Activated CD8-positive, alpha-beta T cell treated with anti-CD3 and anti-CD28 coated beads for 36 hours (primary cell): ENCODE measurements at regions of chr1 and their contacts with region 1.

Region 1: GRCh38 chr1:28886731-28887418 is 27.5 kb upstream of the EPB41 start:
- DNase-seq: peak; percentile 92
- ATAC-seq: peak; percentile 76
- H3K4me3 Mint-ChIP-seq: peak overlapping the region; percentile 86
- H3K27ac Mint-ChIP-seq: peak overlapping the region; percentile 98
- H3K4me1 Mint-ChIP-seq: peaks cover 52% of the 10 kb centered on the region
- H3K27me3 Mint-ChIP-seq: no peaks in the 10 kb centered on the region
- CTCF ChIP-seq: no peak

Region 2: GRCh38 chr1:28775121-28775944 is 111.5 kb before region 1 on chr1:
- CTCF ChIA-PET with region 1: interaction called, 18 read pairs
- POLR2A ChIA-PET with region 1: no interaction called
- intact Hi-C with region 1: no loop called
- DNase-seq: peak; percentile 71
- ATAC-seq: peak; percentile 94
- H3K4me3 Mint-ChIP-seq: peak overlapping the region; percentile 68
- H3K27ac Mint-ChIP-seq: peak overlapping the region; percentile 71
- H3K4me1 Mint-ChIP-seq: peaks cover 4% of the 10 kb centered on the region
- H3K27me3 Mint-ChIP-seq: no peaks in the 10 kb centered on the region
- CTCF ChIP-seq: no peak

Region 3: GRCh38 chr1:28914228-28915030 is 27.6 kb after region 1 on chr1 and contains the start of gene EPB41:
- CTCF ChIA-PET with region 1: interaction called, 15 read pairs
- POLR2A ChIA-PET with region 1: interaction called, 6 read pairs
- intact Hi-C with region 1: no loop called
- DNase-seq: peak; percentile 93
- ATAC-seq: peak; percentile 90
- H3K4me3 Mint-ChIP-seq: peak within 1 kb of the TSS; percentile 92
- H3K27ac Mint-ChIP-seq: peak within 1 kb of the TSS; percentile 95
- H3K4me1 Mint-ChIP-seq: peaks cover 48% of the 10 kb centered on the region
- H3K27me3 Mint-ChIP-seq: no peaks in the 10 kb centered on the region
- CTCF ChIP-seq: no peak
- total RNA-seq, gene EPB41: 74.9 to 80.3 TPM

Region 4: GRCh38 chr1:29062157-29062942 is 175.5 kb after region 1 on chr1:
- CTCF ChIA-PET with region 1: interaction called, 11 read pairs
- POLR2A ChIA-PET with region 1: no interaction called
- intact Hi-C with region 1: no loop called
- DNase-seq: peak; percentile 66
- ATAC-seq: peak; percentile 88
- H3K4me3 Mint-ChIP-seq: peak overlapping the region; percentile 63
- H3K27ac Mint-ChIP-seq: peak overlapping the region; percentile 95
- H3K4me1 Mint-ChIP-seq: peaks cover 56% of the 10 kb centered on the region
- H3K27me3 Mint-ChIP-seq: no peaks in the 10 kb centered on the region
- CTCF ChIP-seq: no peak

Region 5: DNA sequence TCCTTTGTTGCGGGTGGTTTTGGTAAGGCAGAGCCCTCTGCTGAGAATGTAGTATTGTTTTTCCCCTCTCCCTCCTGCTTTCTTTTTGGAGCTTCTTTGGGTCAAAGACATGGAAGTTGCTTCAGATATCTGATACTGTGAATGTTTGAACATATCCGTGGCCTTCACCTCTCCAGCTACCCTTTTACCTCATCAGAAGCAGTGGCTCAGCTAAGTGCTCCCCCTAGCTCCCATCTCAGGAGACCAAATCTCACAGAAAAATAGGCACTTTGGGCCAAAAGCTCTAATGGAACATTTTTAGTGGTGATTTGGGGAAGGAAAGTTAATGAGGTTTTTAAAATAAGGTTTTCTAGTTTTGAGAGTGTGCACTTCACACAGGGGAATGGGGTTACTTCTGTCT is 230.5 kb after region 1 on chr1:
- CTCF ChIA-PET with region 1: interaction called, 13 read pairs
- POLR2A ChIA-PET with region 1: no interaction called
- intact Hi-C with region 1: loop called (anchors 5 kb)
- DNase-seq: no peak
- ATAC-seq: no peak
- H3K4me3 Mint-ChIP-seq: no peak overlapping the region
- H3K27ac Mint-ChIP-seq: peak overlapping the region; percentile 29
- H3K4me1 Mint-ChIP-seq: peaks cover 10% of the 10 kb centered on the region
- H3K27me3 Mint-ChIP-seq: peaks cover 2% of the 10 kb centered on the region
- CTCF ChIP-seq: no peak

Region 6: DNA sequence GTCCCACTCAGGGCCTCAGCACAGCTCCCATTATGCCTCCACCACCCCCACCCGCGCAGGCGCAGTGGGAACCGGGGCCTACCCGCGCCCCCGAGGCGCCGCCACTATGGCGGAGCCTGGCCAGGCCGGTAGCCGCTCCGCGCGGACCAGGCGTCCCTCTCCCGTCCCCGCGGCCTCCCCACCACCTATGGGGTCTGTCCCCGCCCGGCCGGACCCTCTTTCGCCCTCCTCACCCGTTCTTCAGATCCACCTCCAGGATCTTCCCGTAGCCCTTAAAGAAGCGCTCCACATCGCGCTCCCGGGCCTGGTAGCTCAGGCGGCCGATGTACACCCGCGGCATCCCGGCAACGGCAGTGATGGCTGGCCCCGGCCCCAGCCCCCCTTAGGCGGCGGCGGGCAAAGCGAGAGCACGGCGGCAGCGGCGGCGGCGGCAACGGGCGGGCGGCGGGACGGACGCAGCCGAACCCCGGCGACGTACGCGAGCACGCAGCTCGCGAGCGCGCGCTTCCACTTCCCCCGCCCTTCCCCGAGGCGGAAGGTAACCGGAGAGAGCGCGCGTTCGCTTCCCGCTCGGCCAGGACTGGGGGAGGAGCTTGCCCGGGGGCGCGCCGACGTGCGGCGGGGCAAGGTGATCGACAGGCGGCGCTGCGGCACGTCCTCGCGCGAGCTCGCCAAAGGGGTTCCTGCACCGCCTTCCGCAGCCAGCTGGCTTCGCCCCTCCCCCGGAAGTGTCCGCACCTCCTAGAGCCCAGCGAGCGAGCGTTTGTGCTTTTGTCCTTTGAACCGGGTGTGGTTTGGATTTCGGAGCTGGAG is 294.7 kb after region 1 on chr1 and contains the start of gene SRSF4:
- CTCF ChIA-PET with region 1: interaction called, 6 read pairs
- POLR2A ChIA-PET with region 1: interaction called, 7 read pairs
- intact Hi-C with region 1: loop called (anchors 5 kb)
- DNase-seq: peak; percentile 98
- ATAC-seq: peak; percentile 95
- H3K4me3 Mint-ChIP-seq: peak within 1 kb of the TSS; percentile 83
- H3K27ac Mint-ChIP-seq: peak within 1 kb of the TSS; percentile 98
- H3K4me1 Mint-ChIP-seq: peaks cover 42% of the 10 kb centered on the region
- H3K27me3 Mint-ChIP-seq: no peaks in the 10 kb centered on the region
- CTCF ChIP-seq: peak; percentile 53
- total RNA-seq, gene SRSF4: 121 to 123 TPM

Region 7: DNA sequence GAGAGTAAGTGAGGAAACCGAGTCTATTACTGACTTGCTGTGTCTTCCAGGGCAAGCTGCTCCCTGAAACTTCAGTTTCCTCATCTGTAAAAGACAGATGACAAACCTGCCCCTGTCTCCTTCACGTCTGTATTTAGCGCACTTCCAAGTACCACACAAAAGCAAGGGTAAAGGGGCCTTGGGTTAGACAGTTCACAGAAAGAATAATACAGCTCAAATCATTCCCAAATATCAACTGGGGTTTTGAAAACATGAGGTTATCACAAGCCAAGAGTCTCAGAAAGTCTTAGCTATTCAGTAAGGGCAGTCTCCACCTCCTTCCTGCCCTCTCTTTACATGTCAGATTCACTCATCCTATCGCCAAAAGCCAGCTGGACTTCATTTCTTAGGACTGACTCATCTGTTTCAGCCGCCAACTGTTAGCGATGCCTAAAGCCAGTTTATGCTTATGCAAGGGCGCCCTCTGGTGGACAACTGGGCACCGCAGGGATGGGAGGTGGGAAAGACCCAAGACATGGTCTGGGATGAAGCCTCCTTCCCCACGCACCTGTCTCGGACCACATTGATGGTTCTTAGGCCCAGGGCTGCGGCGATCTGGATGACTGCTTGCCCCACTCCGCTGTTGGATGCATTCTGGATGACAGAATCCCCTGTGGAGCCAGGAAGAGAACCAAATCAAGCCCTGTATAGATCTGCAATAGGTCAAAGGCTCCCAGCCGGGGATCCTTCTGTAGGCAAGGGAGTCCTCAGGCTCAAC is 315.9 kb after region 1 on chr1:
- CTCF ChIA-PET with region 1: interaction called, 40 read pairs
- POLR2A ChIA-PET with region 1: interaction called, 3 read pairs
- intact Hi-C with region 1: loop called (anchors 2 kb)
- DNase-seq: peak; percentile 97
- ATAC-seq: peak; percentile 97
- H3K4me3 Mint-ChIP-seq: no peak overlapping the region
- H3K27ac Mint-ChIP-seq: peak overlapping the region; percentile 21
- H3K4me1 Mint-ChIP-seq: peaks cover 15% of the 10 kb centered on the region
- H3K27me3 Mint-ChIP-seq: no peaks in the 10 kb centered on the region
- CTCF ChIP-seq: peak; percentile 93